Calu3 (cell line): ENCODE measurements at regions of chr2 and their contacts with region 1.

Region 1: GRCh38 chr2:216519154-216519762 is 20.6 kb downstream of the RPL37A start:
- DNase-seq: peak; percentile 76
- H3K4me3 Mint-ChIP-seq: no peak overlapping the region
- H3K27ac Mint-ChIP-seq: no peak overlapping the region
- H3K4me1 Mint-ChIP-seq: no peaks in the 10 kb centered on the region
- H3K27me3 Mint-ChIP-seq: no peaks in the 10 kb centered on the region
- CTCF ChIP-seq: peak; percentile 50

Region 2: DNA sequence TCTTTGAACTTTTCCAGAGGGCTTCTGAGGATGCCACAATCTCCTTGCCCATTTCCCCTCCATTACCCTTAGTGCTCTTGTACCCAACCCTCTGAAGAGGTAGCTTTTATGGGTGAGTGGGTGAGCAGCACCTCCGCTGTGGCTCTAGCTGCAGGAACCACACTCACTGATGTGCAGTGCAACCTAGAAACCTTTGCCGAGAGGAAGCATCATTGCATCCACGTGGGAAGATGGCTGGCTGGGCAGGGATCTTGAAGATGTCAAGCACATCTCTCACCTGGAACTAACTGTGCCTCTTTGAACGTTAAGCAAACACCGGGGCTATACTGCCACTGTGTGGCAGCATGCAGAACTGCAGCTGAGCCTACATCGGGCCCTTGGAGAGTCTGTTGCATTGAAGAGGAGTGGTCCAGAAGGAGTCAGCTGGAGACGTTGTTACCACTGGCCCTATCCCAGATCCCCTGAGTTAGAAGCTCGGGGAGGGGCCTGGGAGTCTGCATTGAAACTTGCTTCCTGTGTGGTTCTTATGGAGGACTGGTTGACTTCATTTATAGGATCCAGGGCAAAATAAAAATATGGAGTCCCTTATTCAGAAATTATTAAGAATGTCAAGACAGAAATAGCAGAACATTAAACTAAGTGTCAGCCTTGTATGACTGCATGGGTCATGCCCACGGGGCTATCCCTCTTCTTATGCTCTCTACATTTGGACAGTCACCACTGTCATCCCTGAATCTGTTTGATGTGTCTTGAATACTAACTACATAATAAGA is 147.4 kb after region 1 on chr2:
- CTCF ChIA-PET with region 1: interaction called, 56 read pairs
- intact Hi-C with region 1: loop called (anchors 1 kb)
- DNase-seq: peak; percentile 77
- H3K4me3 Mint-ChIP-seq: no peak overlapping the region
- H3K27ac Mint-ChIP-seq: no peak overlapping the region
- H3K4me1 Mint-ChIP-seq: peaks cover 18% of the 10 kb centered on the region
- H3K27me3 Mint-ChIP-seq: peaks cover 35% of the 10 kb centered on the region
- CTCF ChIP-seq: peak; percentile 97

Region 3: GRCh38 chr2:216687646-216688045 is 168.4 kb after region 1 on chr2:
- CTCF ChIA-PET with region 1: interaction called, 14 read pairs
- intact Hi-C with region 1: no loop called
- DNase-seq: peak; percentile 35
- H3K4me3 Mint-ChIP-seq: no peak overlapping the region
- H3K27ac Mint-ChIP-seq: no peak overlapping the region
- H3K4me1 Mint-ChIP-seq: peaks cover 28% of the 10 kb centered on the region
- H3K27me3 Mint-ChIP-seq: no peaks in the 10 kb centered on the region
- CTCF ChIP-seq: peak; percentile 38

Region 4: DNA sequence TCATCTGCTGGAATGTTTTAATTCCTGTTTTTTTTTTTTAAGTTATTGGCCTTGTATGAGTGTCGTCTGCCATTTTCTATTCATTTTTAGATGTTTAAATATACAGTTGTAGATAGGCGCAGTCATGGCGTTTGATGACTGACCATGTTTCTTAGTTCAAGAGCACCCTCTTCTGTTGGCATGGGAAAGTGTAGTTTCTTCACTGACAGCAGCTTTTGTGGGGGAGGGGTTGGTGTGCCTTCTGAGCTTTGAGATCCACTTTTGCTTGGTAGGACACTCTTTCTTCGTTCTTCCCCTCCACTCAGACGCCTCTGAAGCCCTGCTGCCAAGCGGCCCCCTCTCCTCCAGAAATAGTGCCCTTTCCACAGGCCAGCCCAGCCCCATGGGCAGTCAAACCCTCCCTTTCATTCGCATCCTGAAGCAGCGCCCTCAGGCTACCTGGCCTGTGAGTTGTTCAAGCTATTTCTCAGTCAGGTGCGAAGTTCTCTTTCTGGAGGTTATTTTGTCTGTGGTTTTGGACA is 991.6 kb after region 1 on chr2:
- CTCF ChIA-PET with region 1: interaction called, 4 read pairs
- intact Hi-C with region 1: loop called (anchors 5 kb)
- DNase-seq: peak; percentile 76
- H3K4me3 Mint-ChIP-seq: no peak overlapping the region
- H3K27ac Mint-ChIP-seq: peak overlapping the region; percentile 90
- H3K4me1 Mint-ChIP-seq: peaks cover 39% of the 10 kb centered on the region
- H3K27me3 Mint-ChIP-seq: no peaks in the 10 kb centered on the region
- CTCF ChIP-seq: peak; percentile 79

Region 5: DNA sequence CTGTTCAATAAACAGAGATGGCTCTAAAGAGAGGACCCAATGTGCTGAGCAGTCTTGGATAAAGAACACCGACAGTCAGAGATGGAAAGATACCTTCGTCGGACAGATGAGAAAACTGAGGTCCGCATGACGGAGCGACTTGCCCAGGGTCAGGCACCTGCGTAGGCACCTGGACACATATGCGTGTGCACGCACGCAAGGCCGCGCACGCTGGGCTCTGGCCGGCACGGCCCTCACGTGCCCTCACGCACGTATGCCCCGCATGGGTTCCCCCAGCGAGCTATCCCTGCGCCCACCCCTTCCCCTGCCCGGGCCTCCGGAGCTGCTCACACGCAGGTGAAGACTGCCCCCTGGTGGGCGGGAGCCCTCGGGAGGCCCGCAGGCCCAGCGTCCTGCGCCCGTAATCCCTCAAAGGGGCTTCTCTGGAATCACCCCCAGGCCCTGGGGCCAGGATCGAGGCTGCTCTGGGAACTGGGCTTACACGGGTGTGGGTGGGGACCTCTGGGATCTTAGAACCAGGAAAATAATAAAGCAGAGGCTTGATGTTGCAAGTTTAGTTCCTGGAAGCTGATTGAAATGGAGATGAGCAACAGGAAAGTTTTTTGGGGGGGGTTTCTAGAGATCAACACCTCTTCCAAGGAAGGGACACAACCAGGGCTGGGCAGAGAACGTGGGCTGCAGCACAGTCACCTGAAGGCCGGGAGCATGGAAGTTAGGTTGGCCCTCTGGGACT is 1237.3 kb after region 1 on chr2:
- CTCF ChIA-PET with region 1: no interaction called
- intact Hi-C with region 1: loop called (anchors 2 kb)
- DNase-seq: peak; percentile 84
- H3K4me3 Mint-ChIP-seq: no peak overlapping the region
- H3K27ac Mint-ChIP-seq: no peak overlapping the region
- H3K4me1 Mint-ChIP-seq: no peaks in the 10 kb centered on the region
- H3K27me3 Mint-ChIP-seq: peaks cover 19% of the 10 kb centered on the region
- CTCF ChIP-seq: peak; percentile 93